Activated naive CD4-positive, alpha-beta T cell treated with anti-CD3 and anti-CD28 coated beads, Interleukin-2, amount 10 ng/mL, durations not matched to agents 7 days and 5 days (primary cell): ENCODE measurements at regions of chr12 and their contacts with region 1.

Region 1: GRCh38 chr12:51980051-51980808 is 26.5 kb upstream of the TAMALIN start:
- DNase-seq: peak; percentile 75
- H3K4me3 Mint-ChIP-seq: no peak overlapping the region
- H3K27ac Mint-ChIP-seq: no peak overlapping the region
- H3K4me1 Mint-ChIP-seq: peaks cover 21% of the 10 kb centered on the region
- H3K27me3 Mint-ChIP-seq: peaks cover under 1% of the 10 kb centered on the region

Region 2: GRCh38 chr12:51923501-51924271 is 56.5 kb before region 1 on chr12:
- CTCF ChIA-PET with region 1: interaction called, 42 read pairs
- DNase-seq: peak; percentile 65
- H3K4me3 Mint-ChIP-seq: no peak overlapping the region
- H3K27ac Mint-ChIP-seq: no peak overlapping the region
- H3K4me1 Mint-ChIP-seq: peaks cover 4% of the 10 kb centered on the region
- H3K27me3 Mint-ChIP-seq: peaks cover 38% of the 10 kb centered on the region

Region 3: DNA sequence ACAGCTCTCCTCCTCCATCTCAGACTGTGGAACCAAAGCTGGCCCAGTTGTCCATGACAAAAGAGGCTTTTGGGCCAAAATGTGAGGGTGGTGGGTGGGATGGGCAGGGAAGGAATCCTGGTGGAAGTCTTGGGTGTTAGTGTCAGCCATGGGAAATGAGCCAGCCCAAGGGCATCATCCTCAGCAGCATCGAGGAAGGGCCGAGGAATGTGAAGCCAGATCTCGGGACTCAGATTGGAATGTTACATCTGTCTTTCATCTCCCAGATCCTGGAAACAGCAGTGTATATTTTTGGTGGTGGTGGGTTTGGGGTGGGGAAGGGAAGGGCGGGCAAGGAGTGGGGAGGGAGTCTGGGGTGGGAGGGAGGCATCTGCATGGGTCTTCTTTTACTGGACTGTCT is 14.7 kb after region 1 on chr12:
- CTCF ChIA-PET with region 1: interaction called, 14 read pairs
- DNase-seq: no peak
- H3K4me3 Mint-ChIP-seq: no peak overlapping the region
- H3K27ac Mint-ChIP-seq: no peak overlapping the region
- H3K4me1 Mint-ChIP-seq: peaks cover 3% of the 10 kb centered on the region
- H3K27me3 Mint-ChIP-seq: no peaks in the 10 kb centered on the region

Region 4: DNA sequence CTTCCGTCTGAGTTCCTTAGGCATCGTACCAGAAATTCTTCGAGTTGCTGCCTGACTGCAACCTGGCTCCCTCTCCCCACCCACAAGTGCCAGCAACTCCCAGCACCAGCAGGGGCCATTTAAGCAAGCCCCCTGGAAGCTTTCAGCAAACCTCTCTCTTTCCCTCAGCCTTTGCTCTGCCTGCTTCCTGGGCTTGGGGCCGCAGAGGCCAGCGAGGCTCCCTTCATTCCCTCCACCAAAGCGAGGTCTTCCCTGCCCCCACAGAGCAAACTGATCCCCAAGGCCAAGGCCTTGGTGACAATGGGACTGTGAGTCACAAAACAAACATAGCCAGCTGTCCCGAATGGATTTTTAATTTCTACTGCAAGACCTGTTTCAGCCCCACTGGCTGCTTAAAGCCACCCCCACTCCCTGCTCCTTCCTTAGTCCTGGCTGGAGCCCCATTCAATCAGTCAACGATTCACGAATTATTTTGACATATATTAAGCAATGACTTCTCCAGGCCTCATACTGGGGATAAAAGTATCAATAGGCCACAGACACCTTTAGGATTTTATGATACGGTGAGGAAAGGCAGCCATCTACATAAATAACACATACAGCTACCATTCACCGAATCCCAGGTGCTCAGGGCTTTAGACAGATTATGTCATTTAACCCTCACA is 267.1 kb after region 1 on chr12:
- CTCF ChIA-PET with region 1: no interaction called
- DNase-seq: no peak
- H3K4me3 Mint-ChIP-seq: no peak overlapping the region
- H3K27ac Mint-ChIP-seq: peak overlapping the region; percentile 62
- H3K4me1 Mint-ChIP-seq: peaks cover 83% of the 10 kb centered on the region
- H3K27me3 Mint-ChIP-seq: peaks cover 31% of the 10 kb centered on the region